GM10248 (cell line): ENCODE measurements at regions of chr13 and their contacts with region 1.

Region 1: DNA sequence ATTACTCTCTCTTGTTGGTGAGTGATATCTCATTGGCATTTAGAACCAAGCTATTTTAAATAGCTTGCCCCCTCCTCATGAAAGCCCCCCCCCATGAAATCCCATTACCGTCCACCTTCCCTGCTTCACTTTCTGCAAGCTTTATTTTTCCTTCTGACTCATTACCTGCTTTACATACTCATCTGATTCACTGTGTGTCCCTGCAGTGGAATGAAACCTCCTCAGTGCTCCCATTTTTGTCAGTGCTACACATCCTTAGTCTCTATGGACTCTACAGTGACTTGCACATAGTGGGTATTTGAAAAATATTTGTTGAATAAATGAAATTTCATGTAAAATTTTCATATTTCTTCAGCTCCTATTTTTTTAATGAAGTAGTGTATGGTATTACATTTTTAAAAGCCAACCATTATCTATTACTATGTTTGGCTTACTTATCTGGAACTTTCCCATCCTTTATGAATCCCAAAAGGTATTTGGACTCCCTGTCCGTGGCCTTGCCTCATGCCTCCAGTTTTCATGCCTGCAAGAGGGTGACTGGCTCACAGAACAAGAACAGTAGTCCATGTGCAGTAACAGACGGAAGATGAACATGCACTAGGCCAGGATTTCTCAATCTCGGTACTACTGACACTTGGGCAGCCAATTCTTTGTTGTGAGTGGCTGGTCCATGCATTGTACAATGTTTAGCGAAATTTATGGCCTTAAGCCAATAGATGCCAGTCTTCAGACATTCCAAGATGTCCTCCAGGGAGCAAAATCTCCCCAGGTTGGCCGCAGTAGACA is 62.1 kb downstream of the DOCK9 start:
- DNase-seq: no peak
- CTCF ChIP-seq: no peak

Region 2: GRCh38 chr13:98175043-98175442 is 740.7 kb before region 1 on chr13:
- CTCF ChIA-PET with region 1: no interaction called
- POLR2A ChIA-PET with region 1: no interaction called
- DNase-seq: no peak
- CTCF ChIP-seq: no peak

Region 3: DNA sequence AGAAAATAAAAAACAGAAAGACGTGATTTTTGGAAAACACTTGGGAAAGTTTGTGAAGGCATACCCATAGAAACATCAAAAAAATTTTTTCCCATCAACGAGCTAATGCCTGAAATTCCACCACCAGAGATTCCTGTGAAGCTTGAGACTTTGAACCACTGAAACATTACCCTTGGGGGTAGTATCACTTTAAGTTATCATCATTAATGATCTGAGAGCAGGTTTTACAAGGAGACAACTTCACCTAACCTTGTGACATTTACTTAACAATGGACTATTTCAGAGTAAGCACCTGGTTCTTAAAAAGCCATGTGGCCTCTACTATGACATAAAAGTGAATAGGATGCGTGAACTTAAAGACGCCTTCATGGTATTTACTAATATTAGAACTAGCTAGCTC is 10.2 kb after region 1 on chr13:
- CTCF ChIA-PET with region 1: interaction called, 13 read pairs
- POLR2A ChIA-PET with region 1: no interaction called
- DNase-seq: no peak
- CTCF ChIP-seq: no peak